Activated B cell treated with CpG ODN at 0.5 μM for 24 hours (primary cell): ENCODE measurements at regions of chr12 and their contacts with region 1.

Region 1: GRCh38 chr12:15584366-15585041 is 204.7 kb downstream of the EPS8 start:
- DNase-seq: no peak
- ATAC-seq: peak; percentile 71
- H3K4me3 Mint-ChIP-seq: no peak overlapping the region
- H3K27ac Mint-ChIP-seq: no peak overlapping the region
- H3K4me1 Mint-ChIP-seq: no peaks in the 10 kb centered on the region
- H3K27me3 Mint-ChIP-seq: no peaks in the 10 kb centered on the region
- CTCF ChIP-seq: peak; percentile 83

Region 2: DNA sequence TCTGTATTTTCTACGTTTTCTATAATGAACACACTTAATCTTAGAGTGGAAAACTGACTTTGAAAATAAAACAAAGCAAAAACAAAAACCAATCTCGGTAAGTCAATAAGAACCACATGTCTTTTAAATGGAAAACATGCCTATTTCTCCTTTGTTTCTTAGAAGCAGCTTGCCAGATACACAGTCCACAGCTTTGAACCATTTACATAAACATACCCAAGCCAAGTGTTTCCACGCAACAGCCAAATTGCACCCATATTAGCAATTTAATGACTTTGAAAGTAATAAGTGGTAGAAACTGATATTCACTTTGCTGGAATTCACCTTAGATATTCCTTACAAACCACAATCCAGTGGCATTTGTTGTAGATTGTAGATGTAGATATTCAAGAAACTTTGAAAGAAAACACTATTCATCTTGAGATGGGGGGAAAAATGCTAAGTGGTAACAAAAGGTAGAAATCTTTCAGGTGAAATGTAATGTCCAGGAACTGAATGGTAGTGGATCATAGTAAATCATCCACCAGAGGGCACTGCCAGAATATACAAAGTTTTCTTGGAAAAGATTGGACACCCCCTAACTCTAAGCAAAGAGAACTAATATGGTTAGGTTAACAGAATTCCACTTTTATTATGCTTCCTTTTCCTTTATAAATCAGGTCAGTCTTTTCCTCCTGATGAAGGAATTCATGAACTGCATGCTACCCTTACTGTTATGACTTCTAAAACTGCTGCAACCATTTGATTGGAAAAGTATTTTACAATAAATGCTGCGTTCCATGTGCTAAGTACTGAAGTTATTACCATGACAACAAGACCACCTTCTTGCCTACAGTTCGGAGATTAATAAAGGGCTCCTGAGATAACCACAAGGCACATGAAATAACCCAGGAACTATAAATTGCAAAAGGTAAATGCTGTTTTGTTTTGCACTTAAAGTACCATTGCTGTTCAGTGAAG is 433.1 kb before region 1 on chr12:
- CTCF ChIA-PET with region 1: no interaction called
- POLR2A ChIA-PET with region 1: no interaction called
- intact Hi-C with region 1: loop called (anchors 10 kb)
- DNase-seq: no peak
- ATAC-seq: no peak
- H3K4me3 Mint-ChIP-seq: no peak overlapping the region
- H3K27ac Mint-ChIP-seq: no peak overlapping the region
- H3K4me1 Mint-ChIP-seq: no peaks in the 10 kb centered on the region
- H3K27me3 Mint-ChIP-seq: no peaks in the 10 kb centered on the region
- CTCF ChIP-seq: no peak

Region 3: DNA sequence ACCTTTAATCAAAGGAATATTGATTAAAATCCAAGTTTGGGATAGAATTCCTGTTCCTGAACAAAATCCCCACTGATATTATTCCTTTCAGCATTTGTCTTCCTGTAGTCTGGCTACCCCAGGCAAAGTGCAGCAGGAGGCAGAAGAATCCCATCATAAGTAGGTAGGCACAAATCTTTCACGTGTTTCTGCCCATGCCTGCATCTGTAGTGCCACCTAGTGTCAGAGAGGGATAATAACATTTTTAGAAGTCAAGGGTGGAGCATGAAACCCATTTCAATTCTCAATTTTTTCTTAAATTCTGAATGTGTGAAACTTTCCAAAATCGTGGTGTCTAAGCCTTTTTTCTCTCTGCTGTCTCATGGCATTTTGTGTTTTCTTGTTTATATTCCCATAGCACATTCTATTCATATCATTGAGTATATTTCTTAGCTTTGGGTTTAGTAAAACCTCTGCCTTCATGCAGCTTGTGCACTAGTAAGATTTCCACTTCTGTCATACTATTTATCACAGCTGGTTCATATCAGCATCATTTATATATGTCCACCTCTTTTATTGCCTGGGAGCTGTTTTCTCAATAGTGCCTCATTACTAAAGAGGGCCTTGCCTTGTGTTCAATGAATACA is 315.5 kb before region 1 on chr12:
- CTCF ChIA-PET with region 1: no interaction called
- POLR2A ChIA-PET with region 1: no interaction called
- intact Hi-C with region 1: loop called (anchors 2 kb)
- DNase-seq: no peak
- ATAC-seq: peak; percentile 62
- H3K4me3 Mint-ChIP-seq: no peak overlapping the region
- H3K27ac Mint-ChIP-seq: no peak overlapping the region
- H3K4me1 Mint-ChIP-seq: no peaks in the 10 kb centered on the region
- H3K27me3 Mint-ChIP-seq: peaks cover 5% of the 10 kb centered on the region
- CTCF ChIP-seq: peak; percentile 76

Region 4: DNA sequence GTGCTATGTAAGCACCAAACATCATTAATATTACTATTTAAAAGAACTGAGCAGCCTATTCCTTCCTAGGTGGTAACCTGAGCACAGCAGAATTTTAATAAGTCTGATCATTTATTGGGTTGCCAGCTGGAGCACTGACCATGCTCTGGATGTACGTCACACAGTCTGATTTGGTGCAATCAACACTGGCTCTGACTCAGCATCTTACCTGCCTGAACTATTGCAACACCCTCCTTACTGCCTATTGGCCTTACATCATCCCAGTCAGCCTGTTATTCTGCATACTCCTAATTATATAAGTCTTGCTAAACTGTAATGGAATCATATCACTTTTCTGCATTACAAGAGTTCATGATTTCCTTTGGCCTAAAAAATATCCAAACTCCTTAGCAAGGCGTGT is 112.5 kb before region 1 on chr12:
- CTCF ChIA-PET with region 1: no interaction called
- POLR2A ChIA-PET with region 1: no interaction called
- intact Hi-C with region 1: no loop called
- DNase-seq: no peak
- ATAC-seq: no peak
- H3K4me3 Mint-ChIP-seq: no peak overlapping the region
- H3K27ac Mint-ChIP-seq: no peak overlapping the region
- H3K4me1 Mint-ChIP-seq: no peaks in the 10 kb centered on the region
- H3K27me3 Mint-ChIP-seq: peaks cover 13% of the 10 kb centered on the region
- CTCF ChIP-seq: no peak

Region 5: DNA sequence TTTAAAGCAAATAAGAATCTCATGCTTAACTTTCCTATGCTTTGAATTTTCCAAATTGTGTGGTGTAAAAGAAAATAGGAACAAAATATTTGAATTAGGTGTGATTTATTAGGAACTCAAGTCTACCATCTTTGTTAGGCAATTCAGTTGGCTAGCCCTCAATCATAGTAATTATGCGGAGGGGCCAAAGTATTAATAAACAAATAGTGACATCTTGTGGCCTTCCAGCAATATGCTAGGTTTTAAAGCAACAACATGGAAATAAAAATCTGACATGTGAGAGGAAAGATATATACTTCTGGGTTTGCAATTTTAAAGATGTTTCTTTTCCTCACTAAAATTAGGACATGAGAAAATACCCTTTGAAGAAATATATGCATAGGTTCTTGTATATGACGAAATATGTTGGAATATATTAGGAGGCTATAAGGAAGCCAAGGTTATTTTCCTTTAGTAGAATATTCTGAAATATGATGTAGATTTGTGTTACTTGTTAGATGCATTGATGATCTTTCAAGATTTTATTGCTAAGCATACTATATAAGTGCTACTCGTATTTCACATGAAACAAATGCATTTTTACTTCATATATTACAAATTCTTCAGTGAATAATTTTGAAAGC is 61.8 kb before region 1 on chr12:
- CTCF ChIA-PET with region 1: interaction called, 480 read pairs
- POLR2A ChIA-PET with region 1: interaction called, 4 read pairs
- intact Hi-C with region 1: no loop called
- DNase-seq: no peak
- ATAC-seq: no peak
- H3K4me3 Mint-ChIP-seq: no peak overlapping the region
- H3K27ac Mint-ChIP-seq: no peak overlapping the region
- H3K4me1 Mint-ChIP-seq: peaks cover 12% of the 10 kb centered on the region
- H3K27me3 Mint-ChIP-seq: peaks cover 15% of the 10 kb centered on the region
- CTCF ChIP-seq: no peak

Region 6: GRCh38 chr12:15546102-15546701 is 38.3 kb before region 1 on chr12:
- CTCF ChIA-PET with region 1: interaction called, 36 read pairs
- POLR2A ChIA-PET with region 1: interaction called, 4 read pairs
- intact Hi-C with region 1: no loop called
- DNase-seq: no peak
- ATAC-seq: peak; percentile 76
- H3K4me3 Mint-ChIP-seq: peak overlapping the region; percentile 87
- H3K27ac Mint-ChIP-seq: peak overlapping the region; percentile 99
- H3K4me1 Mint-ChIP-seq: peaks cover 60% of the 10 kb centered on the region
- H3K27me3 Mint-ChIP-seq: no peaks in the 10 kb centered on the region
- CTCF ChIP-seq: no peak

Region 7: DNA sequence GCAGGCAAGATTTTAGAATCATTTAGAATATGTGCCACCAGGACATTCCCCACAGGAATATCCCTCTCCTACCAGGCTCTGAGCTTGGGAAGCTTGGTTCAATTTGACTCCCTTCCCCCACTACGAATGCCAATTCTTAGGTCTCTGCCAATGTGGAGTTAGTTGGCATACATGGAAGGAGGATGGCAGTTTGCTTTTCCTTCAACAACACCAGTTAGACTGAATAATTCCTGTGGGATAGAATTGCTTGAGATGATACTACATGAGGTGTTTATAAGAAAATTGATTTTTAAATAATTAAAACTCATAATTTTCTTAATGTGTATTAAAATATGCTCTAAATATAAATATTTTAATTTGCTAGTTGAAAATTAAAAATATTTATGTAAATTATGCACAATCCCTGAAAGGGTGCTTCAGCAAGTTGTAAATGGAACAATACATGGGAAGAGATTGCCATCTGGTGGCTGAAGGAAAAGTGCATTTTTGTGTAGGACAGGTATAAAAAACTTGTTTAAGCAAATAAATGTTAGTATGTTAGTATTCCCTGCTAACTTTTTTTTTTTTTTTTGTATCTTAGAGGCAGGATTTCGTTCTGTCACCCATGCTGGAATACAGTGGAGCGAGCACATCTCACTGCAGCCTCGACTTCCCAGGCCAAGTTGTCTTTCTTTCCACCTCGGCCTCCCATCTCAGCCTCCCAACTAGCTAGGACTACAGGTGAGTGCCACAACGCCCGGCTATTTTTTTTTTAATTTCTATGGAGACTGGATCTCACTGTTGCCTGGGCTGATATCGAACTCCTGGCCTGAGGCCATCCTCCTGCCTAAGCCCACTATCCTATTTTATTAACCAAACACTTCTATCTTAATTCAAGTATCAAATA is 271.8 kb after region 1 on chr12:
- CTCF ChIA-PET with region 1: interaction called, 46 read pairs
- POLR2A ChIA-PET with region 1: no interaction called
- intact Hi-C with region 1: no loop called
- DNase-seq: no peak
- ATAC-seq: peak; percentile 45
- H3K4me3 Mint-ChIP-seq: no peak overlapping the region
- H3K27ac Mint-ChIP-seq: no peak overlapping the region
- H3K4me1 Mint-ChIP-seq: no peaks in the 10 kb centered on the region
- H3K27me3 Mint-ChIP-seq: no peaks in the 10 kb centered on the region
- CTCF ChIP-seq: peak; percentile 95